G401 (cell line): ENCODE measurements at regions of chr6 and their contacts with region 1.

Region 1: GRCh38 chr6:151014404-151015100 is 149.1 kb downstream of the MTHFD1L start:
- DNase-seq: peak; percentile 92

Region 2: DNA sequence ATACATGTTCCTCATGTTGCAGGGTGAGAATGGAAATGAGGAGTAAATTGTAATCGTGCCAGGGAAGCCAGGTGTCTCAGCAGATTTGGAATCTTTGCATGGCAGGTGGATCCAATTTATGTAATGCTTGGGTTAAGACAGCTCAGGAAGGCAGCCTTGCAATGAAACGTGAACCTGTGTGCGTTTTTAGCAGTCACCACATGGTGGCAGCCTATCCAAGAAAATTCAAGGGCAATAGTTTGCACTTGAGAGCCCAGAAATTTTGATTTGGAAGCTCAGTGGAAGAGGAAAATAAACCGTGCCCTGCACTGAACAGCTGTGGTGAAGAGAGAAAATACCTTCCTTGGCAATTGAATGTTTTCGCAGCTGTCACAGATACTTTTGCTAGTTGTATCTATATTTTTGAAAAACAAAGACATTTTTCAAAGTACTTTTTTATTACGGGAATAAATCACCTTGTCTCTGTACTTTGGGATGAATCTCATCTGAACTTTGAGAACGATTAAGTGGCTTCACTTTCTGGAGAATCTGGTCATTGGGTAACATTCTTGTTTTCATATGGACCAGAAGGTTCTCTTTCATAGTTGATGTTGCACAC is 122.6 kb before region 1 on chr6:
- in situ Hi-C with region 1: loop called (anchors 25 kb)
- DNase-seq: peak; percentile 99

Region 3: GRCh38 chr6:150981095-150981494 is 33.5 kb before region 1 on chr6:
- in situ Hi-C with region 1: no loop called
- DNase-seq: no peak

Region 4: GRCh38 chr6:151323791-151324487 is 309.4 kb after region 1 on chr6:
- in situ Hi-C with region 1: loop called (anchors 25 kb)
- DNase-seq: peak; percentile 95